Right lobe of liver (tissue), 6 donors: ENCODE measurements at regions of chr5 and their contacts with region 1.

Region 1: DNA sequence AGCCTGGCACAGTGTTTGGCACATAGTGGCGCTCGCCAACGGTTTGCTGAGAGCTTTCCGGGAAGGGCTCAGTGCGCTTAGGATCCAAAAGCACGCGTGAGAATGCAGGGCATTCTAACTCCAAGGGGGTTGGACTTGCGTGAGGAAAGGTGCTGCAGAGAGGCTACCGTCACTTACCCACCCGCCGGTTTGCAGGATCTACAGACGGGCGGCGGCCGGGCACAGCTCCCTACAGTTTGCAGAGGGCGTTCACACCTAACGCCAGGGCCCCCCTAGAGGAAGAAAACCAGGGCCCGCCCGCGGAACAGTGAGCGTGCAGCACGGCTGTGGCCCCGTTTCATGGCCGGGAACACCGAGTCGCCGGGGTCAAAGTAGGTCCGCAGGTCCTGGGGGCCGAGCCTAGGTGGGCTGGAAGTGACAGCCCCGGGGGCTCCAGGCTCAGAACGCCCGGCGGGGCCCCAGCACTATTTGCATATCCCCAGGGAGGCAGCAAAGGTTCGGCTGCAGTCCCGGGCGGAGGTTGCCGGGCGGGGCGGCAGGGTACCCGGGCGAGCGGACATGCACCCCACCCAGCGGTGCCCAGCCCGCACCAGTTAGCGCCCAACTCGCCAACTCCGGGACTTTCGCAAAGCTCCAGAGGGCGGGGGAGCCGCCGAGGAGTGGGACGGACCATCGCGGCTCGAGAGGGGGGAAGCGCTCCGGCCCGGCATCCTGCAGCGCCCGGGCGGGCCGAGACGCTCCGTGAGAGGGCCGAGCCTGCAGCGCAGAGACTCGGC is 526 bp upstream of the GALNT10 start:
- DNase-seq: peak; percentile 89 to 91 (median 90)
- ATAC-seq: peak; percentile 94 to 95 (median 95)
- H3K4me3 ChIP-seq: peak overlapping the region; percentile 94 to 95 (median 94)
- H3K27ac ChIP-seq: peak overlapping the region; percentile 36 to 90 (median 83)
- H3K4me1 ChIP-seq: no peaks in the 10 kb centered on the region
- H3K27me3 ChIP-seq: no peaks in the 10 kb centered on the region
- CTCF ChIP-seq: peak; percentile 12 to 34 (median 32)
- POLR2A ChIP-seq: peak; percentile 14

Region 2: DNA sequence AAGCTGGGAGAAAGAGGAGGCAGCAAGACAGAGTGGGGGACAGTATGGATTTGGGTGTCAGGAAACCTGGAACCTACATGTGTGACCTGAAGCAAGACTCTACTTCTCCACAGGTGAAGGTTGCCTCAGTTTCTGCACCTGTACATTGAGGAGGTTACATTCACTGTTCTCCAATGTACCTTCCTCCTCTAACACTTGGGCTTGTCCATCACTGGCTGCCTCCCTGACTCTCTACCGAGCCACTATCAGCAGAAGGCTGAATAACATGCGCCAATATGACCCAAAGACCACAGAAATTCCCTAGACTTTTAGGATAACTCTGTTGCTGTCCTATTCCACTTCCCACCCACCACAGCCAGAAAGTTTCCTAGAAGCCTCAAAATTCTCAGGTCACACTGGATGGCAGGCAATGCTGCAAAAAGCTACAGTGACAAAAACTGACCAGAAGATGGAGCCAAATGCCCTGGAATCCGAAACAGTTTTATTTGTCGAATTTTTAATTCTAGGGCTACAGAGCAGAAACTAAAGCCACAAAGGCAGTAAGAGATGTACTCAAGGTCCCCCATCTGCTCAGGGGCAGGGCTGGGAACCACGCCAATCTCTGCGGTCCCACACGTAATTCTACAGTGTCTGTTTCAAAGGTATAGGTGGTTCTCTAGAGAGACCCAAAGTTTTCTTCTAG is 215.7 kb before region 1 on chr5:
- intact Hi-C with region 1: loop called in 1 of 2 experiments (anchors 10 kb)
- DNase-seq: no peak
- ATAC-seq: peak in 3 of 4 donors; percentile 77 to 87 (median 82)
- H3K4me3 ChIP-seq: no peak overlapping the region
- H3K27ac ChIP-seq: no peak overlapping the region
- H3K4me1 ChIP-seq: no peaks in the 10 kb centered on the region
- H3K27me3 ChIP-seq: no peaks in the 10 kb centered on the region
- CTCF ChIP-seq: peak; percentile 63 to 74 (median 70)
- POLR2A ChIP-seq: no peak

Region 3: DNA sequence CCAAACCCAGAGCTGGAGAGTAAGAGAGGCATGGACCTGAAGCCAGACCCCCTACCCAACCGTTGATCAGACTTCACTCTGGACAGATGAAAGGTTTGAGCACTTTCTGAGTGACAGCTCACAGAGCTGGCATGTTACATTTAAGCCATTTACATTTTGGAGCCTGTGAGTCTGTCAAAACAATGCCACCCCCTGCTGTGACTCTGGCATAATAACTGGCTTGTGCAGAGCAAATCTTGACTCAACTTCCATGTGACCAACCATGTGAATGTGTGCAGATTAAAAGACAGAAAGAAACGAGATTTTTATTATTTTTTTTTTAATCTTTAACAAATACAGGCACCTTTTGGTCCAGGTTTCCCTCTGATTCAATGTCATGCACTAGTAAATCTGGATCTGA is 102.8 kb before region 1 on chr5:
- intact Hi-C with region 1: loop called in 1 of 2 experiments (anchors 10 kb)
- DNase-seq: no peak
- ATAC-seq: no peak
- H3K4me3 ChIP-seq: no peak overlapping the region
- H3K27ac ChIP-seq: no peak overlapping the region
- H3K4me1 ChIP-seq: no peaks in the 10 kb centered on the region
- H3K27me3 ChIP-seq: no peaks in the 10 kb centered on the region
- CTCF ChIP-seq: no peak
- POLR2A ChIP-seq: no peak